Activated naive CD4-positive, alpha-beta T cell treated with anti-CD3 and anti-CD28 coated beads for 36 hours (primary cell): ENCODE measurements at regions of chr14 and their contacts with region 1.

Region 1: GRCh38 chr14:92004062-92004461 is 35.8 kb downstream of the TRIP11 start:
- DNase-seq: no peak
- H3K4me3 Mint-ChIP-seq: no peak overlapping the region
- H3K27ac Mint-ChIP-seq: no peak overlapping the region
- H3K4me1 Mint-ChIP-seq: peaks cover 48% of the 10 kb centered on the region
- H3K27me3 Mint-ChIP-seq: no peaks in the 10 kb centered on the region

Region 2: GRCh38 chr14:91493169-91493568 is 510.9 kb before region 1 on chr14:
- CTCF ChIA-PET with region 1: no interaction called
- intact Hi-C with region 1: loop called (anchors 10 kb)
- DNase-seq: no peak
- H3K4me3 Mint-ChIP-seq: no peak overlapping the region
- H3K27ac Mint-ChIP-seq: peak overlapping the region; percentile 30
- H3K4me1 Mint-ChIP-seq: peaks cover 67% of the 10 kb centered on the region
- H3K27me3 Mint-ChIP-seq: no peaks in the 10 kb centered on the region

Region 3: GRCh38 chr14:91963465-91963864 is 40.6 kb before region 1 on chr14:
- CTCF ChIA-PET with region 1: no interaction called
- intact Hi-C with region 1: no loop called
- DNase-seq: no peak
- H3K4me3 Mint-ChIP-seq: no peak overlapping the region
- H3K27ac Mint-ChIP-seq: no peak overlapping the region
- H3K4me1 Mint-ChIP-seq: peaks cover 20% of the 10 kb centered on the region
- H3K27me3 Mint-ChIP-seq: no peaks in the 10 kb centered on the region